BJ (cell line): ENCODE measurements at regions of chr7 and their contacts with region 1.

Region 1: DNA sequence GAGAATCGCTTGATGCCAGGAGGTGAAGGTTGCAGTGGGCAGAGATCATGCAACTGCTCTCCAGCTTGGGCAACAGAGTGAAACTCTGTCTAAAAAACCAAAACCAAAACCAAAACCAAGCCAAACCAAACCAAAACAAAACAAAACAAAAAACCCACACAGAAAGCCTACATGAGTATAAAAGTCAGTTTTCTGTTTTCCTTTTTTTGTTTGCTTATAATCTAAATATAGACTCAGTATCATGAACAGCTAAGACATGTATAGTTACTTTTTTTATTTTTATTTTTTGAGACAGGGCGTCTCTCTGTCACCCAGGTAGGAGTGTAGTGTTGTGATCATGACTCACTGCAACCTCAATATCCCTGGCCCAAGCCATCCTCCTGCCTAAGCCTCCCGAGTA is 16.8 kb upstream of the MTPN start:
- DNase-seq: no peak
- H3K4me3 ChIP-seq: no peak overlapping the region
- H3K27me3 ChIP-seq: no peaks in the 10 kb centered on the region; the same call in 1 of the 2 replicates
- CTCF ChIP-seq: no peak

Region 2: GRCh38 chr7:136009488-136010079 is 15.6 kb after region 1 on chr7:
- CTCF ChIA-PET with region 1: interaction called, 15 read pairs
- POLR2A ChIA-PET with region 1: no interaction called
- DNase-seq: no peak
- H3K4me3 ChIP-seq: no peak overlapping the region
- H3K27me3 ChIP-seq: no peaks in the 10 kb centered on the region
- CTCF ChIP-seq: peak; percentile 56